ENCODE measurements at regions of chr6 and their contacts with region 1.

Region 1: DNA sequence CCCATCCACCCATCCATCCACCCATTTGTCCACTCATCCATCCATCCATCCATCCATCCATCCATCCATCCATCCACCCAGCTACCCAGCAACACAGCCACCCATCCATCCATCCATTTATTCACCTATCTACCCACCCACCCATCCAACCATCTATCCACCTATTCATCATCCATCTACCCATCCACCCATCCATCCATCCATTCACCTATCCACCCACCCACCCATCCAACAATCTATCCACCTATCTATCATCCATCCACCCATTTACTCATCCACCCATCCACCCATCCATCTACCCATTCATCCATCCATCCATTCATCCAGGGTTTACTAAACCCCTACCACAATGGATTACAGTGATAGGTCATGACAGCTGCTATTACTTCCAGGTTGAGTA is 7.4 kb downstream of the SERPINB1 start:
- DNase-seq: no peak
- ATAC-seq: no peak
- H3K4me3 Mint-ChIP-seq: no peak overlapping the region
- H3K27ac Mint-ChIP-seq: no peak overlapping the region
- H3K4me1 Mint-ChIP-seq: peaks cover 26% of the 10 kb centered on the region
- H3K27me3 Mint-ChIP-seq: no peaks in the 10 kb centered on the region
- CTCF ChIP-seq: no peak

Region 2: DNA sequence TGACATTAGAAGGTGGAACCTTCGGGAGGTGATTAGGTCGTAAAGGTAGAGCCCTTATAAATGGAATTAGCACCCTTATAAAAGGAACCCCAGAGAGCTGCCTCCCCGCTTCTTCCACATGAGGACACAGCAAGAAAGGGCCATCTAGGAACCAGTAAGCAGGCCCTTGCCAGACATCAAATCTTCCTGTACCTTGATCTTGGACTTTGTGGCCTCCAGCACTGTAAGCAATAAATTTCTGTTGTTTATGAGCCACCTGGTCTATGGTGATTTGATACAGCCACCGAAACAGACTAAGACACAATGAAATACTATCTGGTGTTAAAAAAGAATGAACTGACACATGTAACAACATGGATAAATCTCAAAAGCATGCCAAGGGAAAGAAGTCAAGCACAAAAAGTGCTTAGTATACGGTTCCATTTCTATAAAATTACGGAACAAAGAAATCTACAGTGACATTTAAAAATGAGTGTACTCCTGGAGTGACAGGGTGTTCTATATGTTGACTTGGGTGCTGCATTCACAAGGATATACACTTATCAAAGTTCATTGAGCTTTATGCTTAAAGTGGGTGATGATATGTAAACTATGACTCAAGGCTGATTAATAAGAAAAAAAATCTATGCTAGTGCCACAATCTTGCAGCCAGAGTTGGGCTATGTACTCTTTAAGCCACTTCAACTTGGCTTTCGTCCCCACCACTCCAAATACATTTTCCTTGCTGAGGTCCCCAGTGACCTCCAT is 11.0 kb before region 1 on chr6:
- CTCF ChIA-PET with region 1: interaction called, 10 read pairs
- POLR2A ChIA-PET with region 1: interaction called, 3 read pairs
- intact Hi-C with region 1: no loop called
- DNase-seq: no peak
- ATAC-seq: no peak
- H3K4me3 Mint-ChIP-seq: no peak overlapping the region
- H3K27ac Mint-ChIP-seq: no peak overlapping the region
- H3K4me1 Mint-ChIP-seq: peaks cover 13% of the 10 kb centered on the region
- H3K27me3 Mint-ChIP-seq: no peaks in the 10 kb centered on the region
- CTCF ChIP-seq: no peak

Region 3: GRCh38 chr6:2848851-2849250 is 14.6 kb after region 1 on chr6:
- CTCF ChIA-PET with region 1: no interaction called
- POLR2A ChIA-PET with region 1: no interaction called
- intact Hi-C with region 1: no loop called
- DNase-seq: peak; percentile 85
- ATAC-seq: peak; percentile 66
- H3K4me3 Mint-ChIP-seq: peak overlapping the region; percentile 41
- H3K27ac Mint-ChIP-seq: peak overlapping the region; percentile 82
- H3K4me1 Mint-ChIP-seq: peaks cover 56% of the 10 kb centered on the region
- H3K27me3 Mint-ChIP-seq: no peaks in the 10 kb centered on the region
- CTCF ChIP-seq: no peak